Psoas muscle (tissue), 8 donors: ENCODE measurements at regions of chr18 and their contacts with region 1.

Region 1: DNA sequence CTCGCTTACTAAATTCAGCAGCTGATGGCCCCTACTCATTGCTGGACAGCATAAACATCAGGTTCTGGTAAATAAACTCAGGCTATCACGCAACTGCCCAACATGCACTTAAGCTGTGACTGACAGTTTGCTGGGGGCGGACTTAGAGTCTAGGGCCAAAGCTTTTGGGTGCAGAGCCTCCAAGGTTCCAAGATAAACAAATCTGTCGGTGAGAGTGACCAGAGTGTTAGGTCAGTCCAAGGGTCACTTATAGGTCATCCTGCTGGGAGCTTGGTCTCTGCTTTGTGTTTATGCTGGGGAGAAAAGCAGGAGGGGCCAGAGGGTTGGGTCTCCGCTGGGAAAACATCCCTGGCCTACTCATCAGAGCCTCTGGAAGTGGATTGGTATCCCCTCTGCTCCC is 188.6 kb upstream of the GATA6 start:
- DNase-seq: no peak
- ATAC-seq: no peak
- H3K4me3 ChIP-seq: no peak overlapping the region
- H3K27ac ChIP-seq: no peak overlapping the region
- H3K4me1 ChIP-seq: no peaks in the 10 kb centered on the region
- H3K27me3 ChIP-seq: peaks cover 0 to 4% (median 0%) of the 10 kb centered on the region in 3 donors
- CTCF ChIP-seq: no peak

Region 2: GRCh38 chr18:21914739-21915319 is 65.9 kb before region 1 on chr18:
- intact Hi-C with region 1: no loop called
- DNase-seq: no peak
- ATAC-seq: no peak
- H3K4me3 ChIP-seq: no peak overlapping the region
- H3K27ac ChIP-seq: no peak overlapping the region
- H3K4me1 ChIP-seq: no peaks in the 10 kb centered on the region
- H3K27me3 ChIP-seq: peaks cover 0 to 3% (median 0%) of the 10 kb centered on the region in 3 donors
- CTCF ChIP-seq: peak; percentile 13

Region 3: GRCh38 chr18:22015156-22015555 is 34.4 kb after region 1 on chr18:
- intact Hi-C with region 1: loop called in 1 of 2 experiments (anchors 1 kb)
- DNase-seq: no peak
- ATAC-seq: no peak
- H3K4me3 ChIP-seq: no peak overlapping the region
- H3K27ac ChIP-seq: no peak overlapping the region
- H3K4me1 ChIP-seq: no peaks in the 10 kb centered on the region
- H3K27me3 ChIP-seq: peaks cover 0 to 2% (median 0%) of the 10 kb centered on the region in 3 donors
- CTCF ChIP-seq: no peak

Region 4: GRCh38 chr18:22032392-22032961 is 51.7 kb after region 1 on chr18:
- intact Hi-C with region 1: no loop called
- DNase-seq: no peak
- ATAC-seq: no peak
- H3K4me3 ChIP-seq: no peak overlapping the region
- H3K27ac ChIP-seq: no peak overlapping the region
- H3K4me1 ChIP-seq: no peaks in the 10 kb centered on the region
- H3K27me3 ChIP-seq: peaks cover 0 to 4% (median 0%) of the 10 kb centered on the region in 3 donors
- CTCF ChIP-seq: no peak